ENCODE measurements at regions of chr9 and their contacts with region 1.

Region 1: GRCh38 chr9:75265525-75265972 is 177.2 kb downstream of the OSTF1 start:
- DNase-seq: no peak
- ATAC-seq: peak; percentile 87
- H3K4me3 ChIP-seq: no peak overlapping the region
- H3K27ac ChIP-seq: no peak overlapping the region
- H3K4me1 ChIP-seq: no peaks in the 10 kb centered on the region
- H3K27me3 ChIP-seq: no peaks in the 10 kb centered on the region; a peak in 1 of 4 replicates
- CTCF ChIP-seq: peak; percentile 75 to 85 (median 79)
- EP300 ChIP-seq: no peak
- POLR2A ChIP-seq: no peak
- RAD21 ChIP-seq: peak; percentile 79

Region 2: GRCh38 chr9:75242426-75242825 is 23.1 kb before region 1 on chr9:
- CTCF ChIA-PET with region 1: no interaction called
- POLR2A ChIA-PET with region 1: no interaction called
- RAD21 ChIA-PET with region 1: no interaction called
- SMC1A ChIA-PET with region 1: no interaction called
- in situ Hi-C with region 1: no loop called
- intact Hi-C with region 1: no loop called
- DNase-seq: no peak
- ATAC-seq: no peak
- H3K4me3 ChIP-seq: no peak overlapping the region
- H3K27ac ChIP-seq: no peak overlapping the region
- H3K4me1 ChIP-seq: no peaks in the 10 kb centered on the region
- H3K27me3 ChIP-seq: no peaks in the 10 kb centered on the region
- CTCF ChIP-seq: no peak
- EP300 ChIP-seq: no peak
- POLR2A ChIP-seq: no peak
- RAD21 ChIP-seq: no peak

Region 3: GRCh38 chr9:75482566-75482965 is 217.0 kb after region 1 on chr9:
- CTCF ChIA-PET with region 1: interaction called, 3 read pairs
- POLR2A ChIA-PET with region 1: no interaction called
- RAD21 ChIA-PET with region 1: no interaction called
- SMC1A ChIA-PET with region 1: interaction called, 3 read pairs
- in situ Hi-C with region 1: no loop called
- intact Hi-C with region 1: loop called (anchors 5 kb)
- DNase-seq: no peak
- ATAC-seq: no peak
- H3K4me3 ChIP-seq: no peak overlapping the region
- H3K27ac ChIP-seq: no peak overlapping the region
- H3K4me1 ChIP-seq: no peaks in the 10 kb centered on the region
- H3K27me3 ChIP-seq: no peaks in the 10 kb centered on the region
- CTCF ChIP-seq: no peak
- EP300 ChIP-seq: no peak
- POLR2A ChIP-seq: no peak
- RAD21 ChIP-seq: peak; percentile 23; the same call in 1 of the 2 replicates

Region 4: GRCh38 chr9:75591972-75592371 is 326.4 kb after region 1 on chr9:
- CTCF ChIA-PET with region 1: interaction called, 3 read pairs
- POLR2A ChIA-PET with region 1: no interaction called
- RAD21 ChIA-PET with region 1: no interaction called
- SMC1A ChIA-PET with region 1: no interaction called
- in situ Hi-C with region 1: no loop called
- intact Hi-C with region 1: loop called (anchors 5 kb)
- DNase-seq: no peak
- ATAC-seq: no peak
- H3K4me3 ChIP-seq: no peak overlapping the region
- H3K27ac ChIP-seq: no peak overlapping the region
- H3K4me1 ChIP-seq: no peaks in the 10 kb centered on the region
- H3K27me3 ChIP-seq: no peaks in the 10 kb centered on the region
- CTCF ChIP-seq: no peak
- EP300 ChIP-seq: no peak
- POLR2A ChIP-seq: no peak
- RAD21 ChIP-seq: no peak

Region 5: GRCh38 chr9:75855509-75855908 is 590.0 kb after region 1 on chr9:
- CTCF ChIA-PET with region 1: interaction called, 15 read pairs
- POLR2A ChIA-PET with region 1: no interaction called
- RAD21 ChIA-PET with region 1: interaction called, 4 read pairs
- SMC1A ChIA-PET with region 1: interaction called, 6 read pairs
- in situ Hi-C with region 1: loop called (anchors 5 kb)
- intact Hi-C with region 1: no loop called
- DNase-seq: no peak
- ATAC-seq: peak; percentile 63
- H3K4me3 ChIP-seq: no peak overlapping the region
- H3K27ac ChIP-seq: no peak overlapping the region
- H3K4me1 ChIP-seq: no peaks in the 10 kb centered on the region
- H3K27me3 ChIP-seq: no peaks in the 10 kb centered on the region
- CTCF ChIP-seq: peak; percentile 15 to 50 (median 16); a peak in 3 of 6 replicates
- EP300 ChIP-seq: no peak
- POLR2A ChIP-seq: no peak
- RAD21 ChIP-seq: peak; percentile 51

Region 6: GRCh38 chr9:75866273-75866871 is 600.8 kb after region 1 on chr9:
- CTCF ChIA-PET with region 1: interaction called, 12 read pairs
- POLR2A ChIA-PET with region 1: no interaction called
- RAD21 ChIA-PET with region 1: interaction called, 5 read pairs
- SMC1A ChIA-PET with region 1: interaction called, 13 read pairs
- in situ Hi-C with region 1: no loop called
- intact Hi-C with region 1: loop called (anchors 1 kb)
- DNase-seq: no peak
- ATAC-seq: peak; percentile 76
- H3K4me3 ChIP-seq: no peak overlapping the region
- H3K27ac ChIP-seq: no peak overlapping the region
- H3K4me1 ChIP-seq: no peaks in the 10 kb centered on the region
- H3K27me3 ChIP-seq: no peaks in the 10 kb centered on the region; a peak in 1 of 4 replicates
- CTCF ChIP-seq: peak; percentile 55 to 63 (median 58); a peak in 5 of 6 replicates
- EP300 ChIP-seq: no peak
- POLR2A ChIP-seq: no peak
- RAD21 ChIP-seq: peak; percentile 72

Region 7: DNA sequence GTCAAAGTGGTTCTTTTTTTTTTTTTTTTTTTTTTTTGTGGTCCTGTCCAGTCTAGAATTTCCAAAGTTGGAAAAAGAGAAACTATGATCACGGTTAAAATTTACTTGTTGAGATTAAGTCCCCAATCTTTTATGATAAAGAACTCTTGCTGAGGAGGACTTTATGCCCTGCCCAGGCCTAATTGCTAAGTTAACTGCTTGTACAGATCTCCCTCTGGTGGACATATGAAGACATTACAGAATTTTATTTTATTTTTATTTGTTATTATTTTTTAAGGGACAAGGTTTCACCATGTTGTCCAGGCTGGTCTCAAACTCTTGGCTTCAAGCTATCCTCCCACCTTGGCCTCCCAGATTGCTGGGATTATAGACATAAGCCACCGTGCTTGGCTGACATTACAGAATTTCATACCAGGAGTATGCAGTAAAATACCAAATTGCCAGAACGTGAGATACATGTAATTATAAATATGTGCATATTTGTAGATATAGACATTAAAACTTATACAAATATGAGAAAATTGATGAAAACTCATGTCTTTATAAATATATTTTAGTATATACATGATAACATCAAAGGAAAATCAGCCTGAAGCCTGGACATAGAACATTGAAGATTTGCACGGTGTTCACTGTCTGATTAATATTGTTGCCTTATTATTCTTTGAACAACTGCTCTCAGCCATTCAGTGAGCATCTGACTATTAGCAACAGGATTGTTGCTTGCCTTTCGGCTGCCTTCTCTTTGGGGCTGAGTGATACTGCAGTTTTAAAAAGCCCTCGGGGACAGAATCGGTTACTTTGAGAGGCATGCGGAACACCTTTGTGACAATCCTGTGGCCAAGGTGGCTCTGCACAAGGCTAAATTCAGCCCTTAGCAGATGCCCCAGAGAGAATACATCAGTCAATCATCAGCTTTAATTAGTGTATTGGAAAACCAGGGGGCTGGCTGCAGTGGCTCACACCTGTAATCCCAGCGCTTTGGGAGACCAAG is 1037.7 kb after region 1 on chr9:
- CTCF ChIA-PET with region 1: interaction called, 8 read pairs
- POLR2A ChIA-PET with region 1: no interaction called
- RAD21 ChIA-PET with region 1: no interaction called
- SMC1A ChIA-PET with region 1: interaction called, 5 read pairs
- in situ Hi-C with region 1: no loop called
- intact Hi-C with region 1: loop called (anchors 2 kb)
- DNase-seq: no peak
- ATAC-seq: peak; percentile 75
- H3K4me3 ChIP-seq: no peak overlapping the region
- H3K27ac ChIP-seq: no peak overlapping the region
- H3K4me1 ChIP-seq: no peaks in the 10 kb centered on the region
- H3K27me3 ChIP-seq: peaks cover 0 to 2% of the 10 kb centered on the region in 2 experiments; a peak in 2 of 4 replicates
- CTCF ChIP-seq: peak; percentile 47 to 52 (median 47); a peak in 4 of 6 replicates
- EP300 ChIP-seq: no peak
- POLR2A ChIP-seq: no peak
- RAD21 ChIP-seq: peak; percentile 91

Measured in GM12878 (cell line).